ENCODE measurements at regions of chr12 and their contacts with region 1.

Region 1: GRCh38 chr12:53358844-53359431 is 21.0 kb upstream of the SP1 start:
- DNase-seq: no peak
- H3K4me3 ChIP-seq: no peak overlapping the region
- H3K27me3 ChIP-seq: no peaks in the 10 kb centered on the region
- CTCF ChIP-seq: no peak

Region 2: GRCh38 chr12:53427905-53428594 is 69.1 kb after region 1 on chr12:
- CTCF ChIA-PET with region 1: interaction called, 163 read pairs
- POLR2A ChIA-PET with region 1: no interaction called
- DNase-seq: peak; percentile 76
- H3K4me3 ChIP-seq: no peak overlapping the region
- H3K27me3 ChIP-seq: no peaks in the 10 kb centered on the region
- CTCF ChIP-seq: no peak

Region 3: DNA sequence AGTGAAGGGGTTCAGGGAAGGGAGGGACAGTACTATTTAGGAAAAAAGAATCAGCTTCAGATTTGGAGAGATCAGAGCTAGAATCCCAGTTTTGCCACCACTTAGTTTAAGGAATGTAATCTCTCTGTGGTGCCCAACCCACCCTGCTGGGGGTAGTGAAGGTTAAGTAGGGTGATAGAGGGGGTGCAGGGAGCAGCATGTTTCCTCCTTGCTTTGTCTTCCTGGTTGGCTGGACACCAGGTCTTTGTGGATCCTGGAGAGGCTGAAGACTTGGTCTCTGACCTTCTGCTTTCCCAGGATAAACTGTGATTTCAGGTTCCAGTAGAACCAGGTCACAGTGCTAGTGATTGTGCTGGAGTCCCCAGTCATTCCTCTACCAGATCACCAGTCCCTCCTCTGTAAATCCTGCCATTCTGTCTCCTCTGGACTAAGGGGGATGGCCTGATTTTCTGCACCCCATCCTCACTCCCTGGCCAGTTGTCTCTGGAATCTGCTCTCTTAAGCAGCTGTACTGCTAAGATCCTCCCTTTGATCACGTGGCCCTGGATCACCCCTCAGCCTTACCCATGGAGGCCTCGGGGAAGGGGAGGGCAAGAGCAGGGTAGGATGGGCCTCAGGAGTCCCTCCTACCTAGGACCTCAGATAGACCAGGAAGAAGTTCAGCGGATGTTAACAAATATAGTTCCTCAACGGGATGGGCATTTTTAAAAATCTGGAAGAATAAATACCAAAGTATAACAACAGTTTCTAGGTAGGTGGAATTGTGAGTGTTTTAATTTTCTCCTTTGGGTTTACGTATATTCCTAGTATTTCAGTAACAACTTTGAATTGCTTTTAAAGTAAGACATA is 137.2 kb after region 1 on chr12:
- CTCF ChIA-PET with region 1: no interaction called
- POLR2A ChIA-PET with region 1: no interaction called
- DNase-seq: peak; percentile 50
- H3K4me3 ChIP-seq: peak overlapping the region; percentile 10; the same call in 1 of the 2 replicates
- H3K27me3 ChIP-seq: no peaks in the 10 kb centered on the region
- CTCF ChIP-seq: no peak

Region 4: DNA sequence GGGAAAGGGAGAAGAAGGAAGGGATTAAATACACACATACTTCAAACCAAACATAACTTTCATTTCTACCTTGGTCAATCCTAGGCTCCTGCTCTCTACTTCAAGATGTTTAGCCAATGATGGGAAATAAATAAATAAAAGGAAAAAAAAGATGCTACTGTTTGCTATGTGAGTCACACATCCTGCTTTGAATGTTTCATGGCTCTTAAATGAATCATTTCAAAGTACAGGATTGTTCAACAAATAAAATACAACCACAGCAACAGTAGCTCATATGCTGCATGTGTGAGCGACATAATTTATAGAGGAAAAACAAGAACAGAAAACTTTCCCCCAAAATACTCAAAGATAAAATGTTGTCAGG is 202.6 kb after region 1 on chr12:
- CTCF ChIA-PET with region 1: no interaction called
- POLR2A ChIA-PET with region 1: no interaction called
- DNase-seq: peak; percentile 64
- H3K4me3 ChIP-seq: no peak overlapping the region
- H3K27me3 ChIP-seq: no peaks in the 10 kb centered on the region
- CTCF ChIP-seq: no peak